Activated T-helper 1 cell treated with anti-CD3 and anti-CD28 coated beads, Interleukin-12 subunit alpha, Interleukin-12 subunit beta, Interleukin-2, Interleukin-4 antibody, amounts not matched to agents 30 ng/mL and 10 ng/mL and 1 ng/mL, durations not matched to agents 14 hours and 24 hours and 36 hours (primary cell): ENCODE measurements at regions of chr2 and their contacts with region 1.

Region 1: GRCh38 chr2:219543601-219544358 is at the starts of genes CHPF and TMEM198:
- DNase-seq: peak; percentile 94
- H3K4me3 Mint-ChIP-seq: peak within 1 kb of the TSS; percentile 93
- H3K27ac Mint-ChIP-seq: peak within 1 kb of the TSS; percentile 85
- H3K4me1 Mint-ChIP-seq: peaks cover 20% of the 10 kb centered on the region
- H3K27me3 Mint-ChIP-seq: peaks cover 25% of the 10 kb centered on the region
- total RNA-seq, gene CHPF: 41.3 and 43.4 TPM in 2 replicates
- total RNA-seq, gene TMEM198: 2.9 and 3.3 TPM in 2 replicates

Region 2: DNA sequence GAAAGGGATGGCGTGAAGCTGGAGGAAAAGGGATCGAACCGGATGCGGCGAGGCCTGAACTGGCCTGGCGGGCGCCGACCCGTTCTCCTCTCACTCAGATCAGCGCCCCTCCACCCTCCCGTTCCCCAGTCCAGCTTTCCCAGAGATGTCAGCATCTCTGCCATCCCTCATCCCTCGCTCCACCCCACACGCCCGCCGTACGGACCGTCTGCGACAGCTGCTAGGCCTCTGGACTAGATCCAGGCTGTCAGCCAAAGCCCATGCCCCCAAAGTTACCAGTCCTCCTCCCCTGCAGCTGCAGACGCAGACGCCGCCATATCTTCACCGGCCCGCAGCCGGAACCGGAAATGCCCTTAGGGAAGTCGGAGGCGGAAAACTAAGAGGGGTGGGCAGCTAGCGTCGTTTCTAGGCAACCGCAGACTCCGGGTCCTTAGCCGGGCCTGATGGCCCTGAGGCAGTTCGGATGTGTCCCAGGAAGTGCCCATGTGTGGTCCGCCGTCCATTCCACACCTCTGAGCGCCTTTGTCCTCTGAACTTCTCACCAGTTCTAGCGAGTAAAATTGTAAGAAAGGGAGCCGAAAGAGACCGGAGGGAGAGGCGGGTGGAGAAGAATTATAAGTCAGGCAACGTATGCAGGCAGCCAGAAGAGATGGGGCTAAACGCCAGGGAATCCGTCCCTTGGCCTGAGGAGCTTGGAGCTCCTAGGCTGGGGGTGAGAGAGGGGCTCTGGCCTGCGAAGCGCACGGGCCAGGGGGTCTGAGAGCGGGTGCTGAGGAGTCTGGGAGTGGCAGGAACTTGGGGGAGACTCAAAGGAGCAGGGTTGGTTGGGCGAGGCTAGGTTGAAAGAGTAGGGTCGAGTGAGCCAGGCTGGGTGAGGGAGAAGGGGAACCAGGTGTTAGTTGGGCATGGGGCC is 871.9 kb before region 1 on chr2 and contains the starts of genes RNF25 and STK36:
- intact Hi-C with region 1: loop called (anchors 5 kb)
- DNase-seq: peak; percentile 77
- H3K4me3 Mint-ChIP-seq: peak within 1 kb of the TSS; percentile 100
- H3K27ac Mint-ChIP-seq: peak within 1 kb of the TSS; percentile 93
- H3K4me1 Mint-ChIP-seq: peaks cover 22% of the 10 kb centered on the region
- H3K27me3 Mint-ChIP-seq: no peaks in the 10 kb centered on the region
- total RNA-seq, gene RNF25: 29.1 and 31.6 TPM in 2 replicates
- total RNA-seq, gene STK36: 15.9 TPM in 2 replicates

Region 3: GRCh38 chr2:219253753-219254590 is 289.8 kb before region 1 on chr2 and contains the start of gene TUBA4A:
- intact Hi-C with region 1: loop called (anchors 2 kb)
- DNase-seq: peak; percentile 87
- H3K4me3 Mint-ChIP-seq: peak within 1 kb of the TSS; percentile 93
- H3K27ac Mint-ChIP-seq: peak within 1 kb of the TSS; percentile 98
- H3K4me1 Mint-ChIP-seq: peaks cover 50% of the 10 kb centered on the region
- H3K27me3 Mint-ChIP-seq: no peaks in the 10 kb centered on the region
- total RNA-seq, gene TUBA4A: 211 and 217 TPM in 2 replicates

Region 4: GRCh38 chr2:219308142-219309093 is 235.4 kb before region 1 on chr2:
- intact Hi-C with region 1: loop called (anchors 10 kb)
- DNase-seq: peak; percentile 63
- H3K4me3 Mint-ChIP-seq: no peak overlapping the region
- H3K27ac Mint-ChIP-seq: peak overlapping the region; percentile 50
- H3K4me1 Mint-ChIP-seq: no peaks in the 10 kb centered on the region
- H3K27me3 Mint-ChIP-seq: peaks cover 47% of the 10 kb centered on the region

Region 5: DNA sequence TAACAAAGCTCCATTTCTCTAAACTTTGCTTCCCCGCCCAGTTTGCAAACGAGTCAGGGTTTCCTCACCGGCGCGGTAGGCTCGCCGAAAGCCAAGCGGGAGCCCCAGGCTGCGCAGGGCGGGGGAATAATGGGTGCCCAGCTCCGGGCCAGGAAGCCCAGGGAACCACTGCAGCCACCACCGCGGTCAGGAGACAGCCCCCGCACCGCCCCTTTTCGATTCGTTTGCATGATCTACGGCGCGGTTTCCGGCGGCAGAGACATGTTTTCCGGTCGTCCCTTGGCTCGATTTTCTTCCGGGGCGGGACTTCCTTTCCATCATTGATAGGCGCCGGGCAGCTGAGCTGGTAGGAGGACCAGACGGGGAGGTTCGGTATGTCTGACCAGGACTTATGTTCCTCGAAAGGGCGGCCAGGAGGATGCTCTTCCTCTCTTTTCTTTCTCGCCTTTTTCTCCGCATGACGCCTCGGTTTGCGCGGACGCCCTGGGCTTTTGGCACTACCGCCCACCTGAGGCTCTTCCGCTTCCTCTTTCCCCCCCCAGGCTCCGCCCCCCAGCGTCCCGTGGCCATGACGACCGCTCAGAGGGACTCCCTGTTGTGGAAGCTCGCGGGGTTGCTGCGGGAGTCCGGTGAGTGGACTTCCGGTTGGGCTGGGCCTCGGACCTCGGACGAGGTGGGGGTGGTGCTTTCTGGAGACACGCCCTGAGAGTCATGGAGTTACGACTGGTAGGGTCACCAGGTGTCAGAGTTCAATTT is 54.0 kb after region 1 on chr2 and contains the start of gene STK11IP:
- intact Hi-C with region 1: loop called (anchors 1 kb)
- DNase-seq: peak; percentile 89
- H3K4me3 Mint-ChIP-seq: peak within 1 kb of the TSS; percentile 90
- H3K27ac Mint-ChIP-seq: peak within 1 kb of the TSS; percentile 96
- H3K4me1 Mint-ChIP-seq: peaks cover 26% of the 10 kb centered on the region
- H3K27me3 Mint-ChIP-seq: peaks cover 2% of the 10 kb centered on the region
- total RNA-seq, gene STK11IP: 38.0 and 38.9 TPM in 2 replicates

Region 6: GRCh38 chr2:219689676-219690628 is 146.2 kb after region 1 on chr2:
- intact Hi-C with region 1: loop called (anchors 1 kb)
- DNase-seq: peak; percentile 13
- H3K4me3 Mint-ChIP-seq: no peak overlapping the region
- H3K27ac Mint-ChIP-seq: no peak overlapping the region
- H3K4me1 Mint-ChIP-seq: peaks cover 1% of the 10 kb centered on the region
- H3K27me3 Mint-ChIP-seq: peaks cover 6% of the 10 kb centered on the region